HepG2 (cell line): ENCODE measurements at regions of chr6 and their contacts with region 1.

Region 1: DNA sequence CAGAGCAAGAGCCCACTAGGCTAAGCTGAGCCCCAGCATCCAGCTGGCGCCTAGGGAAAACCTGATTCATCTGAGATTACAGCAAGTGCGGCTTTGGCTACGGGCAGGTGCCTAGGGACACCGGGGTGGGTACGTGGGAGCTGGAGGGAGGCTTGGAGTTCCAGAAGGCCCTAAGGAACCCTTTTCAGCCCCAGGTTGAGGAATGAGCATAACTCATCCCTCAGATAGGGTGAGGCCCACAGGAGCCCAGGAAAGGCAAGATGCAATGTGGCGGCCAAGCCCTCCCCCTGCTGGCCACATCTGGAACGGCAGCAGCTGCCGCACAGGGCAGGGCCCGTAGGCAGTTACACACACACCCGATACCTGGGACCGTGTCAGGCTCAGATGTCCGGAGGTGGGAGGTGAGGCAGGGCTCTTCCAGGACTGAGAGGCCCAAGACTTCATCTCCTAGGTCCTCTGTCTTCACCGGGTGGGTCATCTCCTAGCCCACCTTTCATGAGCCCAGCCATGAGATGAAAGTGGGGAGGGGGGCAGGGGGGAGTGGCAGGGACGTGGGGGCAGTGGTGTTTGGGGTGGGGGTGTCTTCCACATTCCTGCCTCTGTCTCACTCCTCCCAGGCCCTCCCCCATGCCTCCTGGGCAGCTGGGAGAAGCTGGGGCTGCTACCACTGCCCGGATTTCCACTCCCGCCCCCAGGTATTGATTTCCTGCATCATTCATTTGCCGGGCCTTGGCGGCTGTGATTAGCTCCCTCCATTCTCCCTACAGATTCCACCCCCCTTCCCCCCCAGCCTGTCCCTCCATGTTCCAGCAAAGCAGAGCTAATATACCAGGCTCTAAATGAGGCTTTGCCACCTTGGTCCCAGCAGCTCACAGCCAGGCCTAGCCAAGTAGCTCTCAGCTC is 5.5 kb downstream of the MDGA1 start:
- DNase-seq: peak; percentile 47
- ATAC-seq: peak; percentile 88
- H3K4me3 ChIP-seq: no peak overlapping the region
- H3K27ac ChIP-seq: no peak overlapping the region
- H3K4me1 ChIP-seq: peaks cover 7% of the 10 kb centered on the region; the same call in 1 of the 2 replicates
- H3K27me3 ChIP-seq: peaks cover 27 to 82% of the 10 kb centered on the region in 2 experiments
- CTCF ChIP-seq: peak; percentile 99
- EP300 ChIP-seq: no peak
- POLR2A ChIP-seq: no peak
- RAD21 ChIP-seq: peak; percentile 91

Region 2: DNA sequence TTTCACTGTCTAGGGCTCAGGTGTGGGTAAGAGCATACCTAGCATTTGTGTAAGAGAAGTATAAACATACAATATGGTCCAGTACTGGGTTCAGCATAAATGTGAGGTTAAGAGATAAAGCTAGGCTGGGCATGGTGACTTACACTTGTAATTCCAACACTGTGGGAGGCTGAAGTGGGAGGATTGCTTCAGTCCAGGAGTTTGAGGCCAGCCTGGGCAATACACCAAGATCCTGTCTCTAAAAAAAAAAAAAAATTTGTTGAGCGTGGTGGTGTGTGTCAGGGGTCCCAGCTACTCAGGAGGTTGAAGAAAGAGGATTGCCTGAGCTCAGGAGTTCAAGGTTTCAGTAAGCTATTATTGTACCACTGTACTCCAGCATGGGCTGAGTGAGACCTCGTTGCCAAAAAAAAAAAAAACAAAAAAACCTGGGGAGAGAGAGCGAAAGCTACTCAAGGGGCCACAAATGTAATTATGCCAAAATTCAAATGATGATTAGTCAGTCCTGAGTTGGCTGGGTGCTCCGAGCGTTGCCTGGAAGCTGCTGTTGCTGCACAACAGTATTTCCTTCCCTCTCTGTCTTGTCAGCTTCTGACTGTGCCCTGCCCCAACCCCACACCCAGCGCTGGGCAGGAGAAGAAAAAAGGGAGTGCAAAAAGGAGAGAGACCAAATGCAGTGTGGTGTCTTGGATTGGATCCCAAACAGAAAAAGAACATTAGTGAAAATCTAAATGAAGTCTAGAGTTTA is 235.2 kb before region 1 on chr6:
- CTCF ChIA-PET with region 1: no interaction called
- POLR2A ChIA-PET with region 1: no interaction called
- in situ Hi-C with region 1: no loop called
- intact Hi-C with region 1: no loop called
- DNase-seq: no peak
- ATAC-seq: no peak
- H3K4me3 ChIP-seq: no peak overlapping the region
- H3K27ac ChIP-seq: no peak overlapping the region
- H3K4me1 ChIP-seq: 0 out of 2 replicates have a peak, but pooled peaks cover 6% of the 10 kb centered on the region
- H3K27me3 ChIP-seq: no peaks in the 10 kb centered on the region
- CTCF ChIP-seq: no peak
- EP300 ChIP-seq: no peak
- POLR2A ChIP-seq: no peak
- RAD21 ChIP-seq: no peak

Region 3: DNA sequence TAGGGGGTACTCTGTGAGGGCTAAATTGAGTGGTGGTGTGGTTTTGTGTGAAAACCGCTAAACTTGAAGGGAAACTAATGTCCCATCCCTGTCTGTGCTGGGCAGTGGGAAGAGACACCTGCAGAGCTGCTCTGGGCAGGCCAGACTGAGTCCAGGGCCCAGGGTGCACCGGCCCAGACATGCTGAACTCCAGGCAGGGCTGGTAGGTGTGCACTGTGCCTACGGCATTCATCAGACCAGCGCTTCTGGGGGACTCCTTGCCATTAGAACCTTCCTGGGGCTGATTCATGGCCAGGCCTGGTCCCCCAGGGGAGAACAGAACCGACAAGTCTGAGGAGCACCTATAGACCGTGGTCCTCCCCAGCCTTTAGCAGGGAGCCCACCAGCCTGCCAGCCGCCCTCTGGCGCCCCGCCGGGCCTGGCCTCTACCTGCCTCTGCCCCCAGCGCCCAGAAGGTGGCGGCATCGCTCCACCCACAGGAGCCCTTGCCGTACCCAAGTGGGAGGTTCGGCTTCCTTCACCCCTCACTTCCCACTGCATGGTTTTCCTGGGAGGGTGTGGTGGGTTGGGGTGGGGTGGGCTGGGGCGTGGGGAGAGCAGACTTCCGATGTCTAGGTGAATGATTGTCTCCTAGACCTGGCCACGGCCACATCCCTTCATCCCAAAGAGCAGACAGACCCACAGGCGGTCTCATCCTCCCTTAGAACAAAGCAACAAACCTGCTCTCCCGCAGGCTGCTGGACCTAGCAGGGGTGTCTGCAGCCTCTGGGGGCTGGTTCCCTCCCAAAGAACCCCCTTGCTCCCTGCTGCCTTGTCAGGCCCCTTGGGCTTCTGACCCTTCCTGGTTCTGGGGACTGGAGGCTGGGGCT is 208.0 kb before region 1 on chr6:
- CTCF ChIA-PET with region 1: interaction called, 6 read pairs
- POLR2A ChIA-PET with region 1: no interaction called
- in situ Hi-C with region 1: no loop called
- intact Hi-C with region 1: loop called (anchors 5 kb)
- DNase-seq: peak; percentile 18
- ATAC-seq: peak; percentile 87
- H3K4me3 ChIP-seq: no peak overlapping the region
- H3K27ac ChIP-seq: no peak overlapping the region
- H3K4me1 ChIP-seq: no peaks in the 10 kb centered on the region
- H3K27me3 ChIP-seq: no peaks in the 10 kb centered on the region
- CTCF ChIP-seq: peak; percentile 92
- EP300 ChIP-seq: no peak
- POLR2A ChIP-seq: no peak
- RAD21 ChIP-seq: peak; percentile 89

Region 4: GRCh38 chr6:37538107-37538506 is 154.0 kb before region 1 on chr6:
- CTCF ChIA-PET with region 1: interaction called, 3 read pairs
- POLR2A ChIA-PET with region 1: no interaction called
- in situ Hi-C with region 1: loop called (anchors 5 kb)
- intact Hi-C with region 1: loop called (anchors 2 kb)
- DNase-seq: peak; percentile 39
- ATAC-seq: peak; percentile 90
- H3K4me3 ChIP-seq: no peak overlapping the region
- H3K27ac ChIP-seq: no peak overlapping the region
- H3K4me1 ChIP-seq: no peaks in the 10 kb centered on the region
- H3K27me3 ChIP-seq: peaks cover 1 to 59% of the 10 kb centered on the region in 2 experiments; a peak in 4 of 5 replicates
- CTCF ChIP-seq: peak; percentile 83
- EP300 ChIP-seq: no peak
- POLR2A ChIP-seq: no peak
- RAD21 ChIP-seq: peak; percentile 66

Region 5: DNA sequence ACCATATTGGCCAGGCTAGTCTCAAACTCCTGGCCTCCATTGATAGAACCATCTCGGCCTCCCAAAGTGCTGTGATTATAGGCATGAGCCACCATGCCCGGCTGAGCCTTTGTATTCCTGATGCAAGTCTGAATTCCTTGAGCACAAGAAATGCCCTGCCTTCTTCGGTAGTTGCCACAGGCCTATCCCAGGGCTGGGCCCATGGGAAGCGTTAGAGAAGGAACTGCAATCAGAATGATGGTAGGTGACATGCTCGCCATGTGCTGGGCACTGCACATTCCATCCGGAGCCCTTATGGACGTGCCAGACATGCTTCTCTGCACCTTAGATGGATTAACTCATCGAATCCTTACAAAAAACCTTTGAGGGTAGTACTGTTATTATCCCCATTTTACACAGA is 110.6 kb before region 1 on chr6:
- CTCF ChIA-PET with region 1: interaction called, 4 read pairs
- POLR2A ChIA-PET with region 1: no interaction called
- in situ Hi-C with region 1: no loop called
- intact Hi-C with region 1: loop called (anchors 1 kb)
- DNase-seq: no peak
- ATAC-seq: no peak
- H3K4me3 ChIP-seq: no peak overlapping the region
- H3K27ac ChIP-seq: no peak overlapping the region
- H3K4me1 ChIP-seq: no peaks in the 10 kb centered on the region
- H3K27me3 ChIP-seq: peaks cover 6 to 68% of the 10 kb centered on the region in 2 experiments; a peak in 3 of 5 replicates
- CTCF ChIP-seq: no peak
- EP300 ChIP-seq: no peak
- POLR2A ChIP-seq: no peak
- RAD21 ChIP-seq: no peak